HCT116 (cell line): ENCODE measurements at regions of chr5 and their contacts with region 1.

Region 1: DNA sequence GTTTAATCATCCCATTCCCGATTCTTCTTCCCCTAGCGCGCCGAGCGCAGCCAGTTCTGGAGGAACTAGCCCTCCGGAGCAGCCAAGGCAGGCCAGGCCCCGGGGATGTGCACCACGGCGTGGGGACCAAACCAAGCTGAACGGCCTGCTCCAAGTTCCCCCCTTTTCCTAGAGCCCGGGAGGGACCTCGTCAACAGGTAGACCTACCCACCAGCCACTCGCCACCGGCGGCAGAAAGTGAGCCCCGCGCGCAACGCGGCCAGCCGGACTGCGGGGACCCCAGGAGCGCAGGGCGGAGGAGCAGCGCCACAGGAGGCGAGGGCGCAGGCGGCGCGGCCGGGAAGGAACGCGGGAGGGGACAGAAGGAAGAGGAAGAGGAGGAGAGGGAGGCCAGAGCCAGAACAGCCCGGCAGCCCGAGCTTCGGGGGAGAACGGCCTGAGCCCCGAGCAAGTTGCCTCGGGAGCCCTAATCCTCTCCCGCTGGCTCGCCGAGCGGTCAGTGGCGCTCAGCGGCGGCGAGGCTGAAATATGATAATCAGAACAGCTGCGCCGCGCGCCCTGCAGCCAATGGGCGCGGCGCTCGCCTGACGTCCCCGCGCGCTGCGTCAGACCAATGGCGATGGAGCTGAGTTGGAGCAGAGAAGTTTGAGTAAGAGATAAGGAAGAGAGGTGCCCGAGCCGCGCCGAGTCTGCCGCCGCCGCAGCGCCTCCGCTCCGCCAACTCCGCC is at the start of gene ISL1:
- DNase-seq: peak; percentile 57
- ATAC-seq: peak; percentile 95
- H3K4me3 ChIP-seq: peak within 1 kb of the TSS; percentile 60 to 73
- H3K27ac ChIP-seq: peak within 1 kb of the TSS; percentile 55; the same call in 1 of the 2 replicates
- H3K4me1 ChIP-seq: no peaks in the 10 kb centered on the region; a peak in 1 of 4 replicates
- H3K27me3 ChIP-seq: no peaks in the 10 kb centered on the region
- CTCF ChIP-seq: no peak
- POLR2A ChIP-seq: peak; percentile 44
- RAD21 ChIP-seq: no peak
- total RNA-seq, gene ISL1: 1.3 TPM

Region 2: DNA sequence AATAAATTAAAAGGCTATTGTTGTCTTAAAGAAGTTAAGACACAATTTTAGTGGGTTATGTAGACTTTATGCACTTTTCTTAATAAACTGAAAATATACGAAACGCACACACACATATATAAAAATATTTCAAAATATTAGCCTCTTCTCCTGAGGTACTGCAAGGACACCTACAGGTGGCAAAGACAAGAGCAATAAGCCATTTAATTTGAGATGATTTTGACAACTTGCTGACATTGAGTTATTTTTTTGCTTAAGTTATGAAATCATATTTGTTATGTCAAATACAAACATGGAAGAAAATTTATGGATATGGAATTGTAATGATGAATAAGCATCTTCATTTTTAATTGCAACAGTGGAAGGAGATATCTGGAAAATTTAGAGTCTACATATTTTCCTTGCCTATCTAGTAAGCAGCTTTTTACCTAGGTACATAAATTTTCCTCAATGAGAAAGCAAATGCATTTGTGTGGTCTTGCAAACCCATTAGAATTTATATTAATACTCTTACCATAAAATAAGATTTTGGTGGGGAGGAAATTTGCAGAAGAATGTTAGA is 301.9 kb after region 1 on chr5:
- CTCF ChIA-PET with region 1: interaction called, 3 read pairs
- POLR2A ChIA-PET with region 1: no interaction called
- RAD21 ChIA-PET with region 1: no interaction called
- intact Hi-C with region 1: loop called (anchors 2 kb)
- DNase-seq: no peak
- ATAC-seq: no peak
- H3K4me3 ChIP-seq: no peak overlapping the region
- H3K27ac ChIP-seq: no peak overlapping the region
- H3K4me1 ChIP-seq: no peaks in the 10 kb centered on the region
- H3K27me3 ChIP-seq: no peaks in the 10 kb centered on the region
- CTCF ChIP-seq: peak; percentile 23 to 36 (median 35); a peak in 2 of 6 replicates
- POLR2A ChIP-seq: no peak
- RAD21 ChIP-seq: peak; percentile 52

Region 3: GRCh38 chr5:51960617-51961115 is 577.7 kb after region 1 on chr5:
- CTCF ChIA-PET with region 1: no interaction called
- POLR2A ChIA-PET with region 1: no interaction called
- RAD21 ChIA-PET with region 1: no interaction called
- intact Hi-C with region 1: loop called (anchors 5 kb)
- DNase-seq: peak; percentile 7
- ATAC-seq: peak; percentile 60
- H3K4me3 ChIP-seq: no peak overlapping the region
- H3K27ac ChIP-seq: no peak overlapping the region
- H3K4me1 ChIP-seq: no peaks in the 10 kb centered on the region
- H3K27me3 ChIP-seq: no peaks in the 10 kb centered on the region
- CTCF ChIP-seq: peak; percentile 31 to 56 (median 38); a peak in 4 of 6 replicates
- POLR2A ChIP-seq: no peak
- RAD21 ChIP-seq: peak; percentile 65

Region 4: GRCh38 chr5:52007230-52007858 is 624.4 kb after region 1 on chr5:
- CTCF ChIA-PET with region 1: interaction called, 3 read pairs
- POLR2A ChIA-PET with region 1: no interaction called
- RAD21 ChIA-PET with region 1: no interaction called
- intact Hi-C with region 1: loop called (anchors 2 kb)
- DNase-seq: peak; percentile 16
- ATAC-seq: peak; percentile 70
- H3K4me3 ChIP-seq: no peak overlapping the region
- H3K27ac ChIP-seq: no peak overlapping the region
- H3K4me1 ChIP-seq: no peaks in the 10 kb centered on the region
- H3K27me3 ChIP-seq: no peaks in the 10 kb centered on the region
- CTCF ChIP-seq: peak; percentile 37 to 70 (median 57); a peak in 5 of 6 replicates
- POLR2A ChIP-seq: no peak
- RAD21 ChIP-seq: peak; percentile 69

Region 5: GRCh38 chr5:52560366-52560765 is 1177.4 kb after region 1 on chr5:
- CTCF ChIA-PET with region 1: no interaction called
- POLR2A ChIA-PET with region 1: no interaction called
- RAD21 ChIA-PET with region 1: no interaction called
- intact Hi-C with region 1: loop called (anchors 5 kb)
- DNase-seq: peak; percentile 3
- ATAC-seq: no peak
- H3K4me3 ChIP-seq: no peak overlapping the region
- H3K27ac ChIP-seq: no peak overlapping the region
- H3K4me1 ChIP-seq: no peaks in the 10 kb centered on the region
- H3K27me3 ChIP-seq: no peaks in the 10 kb centered on the region
- CTCF ChIP-seq: no peak; a peak in 1 of 6 replicates
- POLR2A ChIP-seq: no peak
- RAD21 ChIP-seq: peak; percentile 43; the same call in 1 of the 2 replicates